PC-9 (cell line): ENCODE measurements at regions of chr2 and their contacts with region 1.

Region 1: GRCh38 chr2:196987649-196988364 is 61.3 kb upstream of the PGAP1 start:
- DNase-seq: peak; percentile 47 to 90
- H3K4me3 ChIP-seq: peak overlapping the region; percentile 28; the same call in 1 of the 2 replicates
- H3K27ac ChIP-seq: peak overlapping the region; percentile 92
- H3K4me1 ChIP-seq: peaks cover 32% of the 10 kb centered on the region
- H3K27me3 ChIP-seq: no peaks in the 10 kb centered on the region
- CTCF ChIP-seq: no peak

Region 2: GRCh38 chr2:196719110-196719872 is 268.5 kb before region 1 on chr2:
- CTCF ChIA-PET with region 1: no interaction called
- POLR2A ChIA-PET with region 1: interaction called, 11 read pairs
- intact Hi-C with region 1: no loop called
- DNase-seq: no peak
- H3K4me3 ChIP-seq: no peak overlapping the region
- H3K27ac ChIP-seq: no peak overlapping the region
- H3K4me1 ChIP-seq: no peaks in the 10 kb centered on the region
- H3K27me3 ChIP-seq: no peaks in the 10 kb centered on the region
- CTCF ChIP-seq: no peak

Region 3: DNA sequence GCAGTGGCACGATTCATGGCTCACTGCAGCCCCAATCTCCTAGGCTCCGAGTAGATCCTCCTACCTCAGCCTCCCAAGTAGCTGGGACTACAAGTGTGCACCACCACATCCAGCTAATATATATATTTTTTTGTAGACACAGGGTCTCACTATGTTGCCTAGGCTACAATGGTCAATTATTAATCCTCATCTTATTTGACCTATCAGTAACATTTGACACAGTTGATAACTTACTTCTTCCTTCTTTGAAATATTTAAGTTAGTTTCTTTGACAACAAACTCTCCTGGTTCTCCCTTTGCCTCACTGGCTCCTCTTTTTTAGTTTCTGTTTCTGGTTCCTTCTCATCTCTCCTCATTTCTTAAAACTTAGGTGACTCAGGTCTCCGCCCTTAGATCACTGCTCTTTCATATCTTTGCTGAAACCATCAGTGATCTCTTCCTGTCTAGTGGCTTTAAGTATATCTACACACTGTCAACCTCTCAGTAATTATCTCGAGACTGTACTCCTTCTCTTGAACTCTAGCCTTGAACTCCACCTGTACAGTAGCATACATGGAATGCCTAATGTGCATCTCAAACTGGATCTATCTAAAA is 72.8 kb before region 1 on chr2:
- CTCF ChIA-PET with region 1: no interaction called
- POLR2A ChIA-PET with region 1: no interaction called
- intact Hi-C with region 1: no loop called
- DNase-seq: no peak
- H3K4me3 ChIP-seq: no peak overlapping the region
- H3K27ac ChIP-seq: no peak overlapping the region
- H3K4me1 ChIP-seq: no peaks in the 10 kb centered on the region
- H3K27me3 ChIP-seq: no peaks in the 10 kb centered on the region
- CTCF ChIP-seq: no peak

Region 4: DNA sequence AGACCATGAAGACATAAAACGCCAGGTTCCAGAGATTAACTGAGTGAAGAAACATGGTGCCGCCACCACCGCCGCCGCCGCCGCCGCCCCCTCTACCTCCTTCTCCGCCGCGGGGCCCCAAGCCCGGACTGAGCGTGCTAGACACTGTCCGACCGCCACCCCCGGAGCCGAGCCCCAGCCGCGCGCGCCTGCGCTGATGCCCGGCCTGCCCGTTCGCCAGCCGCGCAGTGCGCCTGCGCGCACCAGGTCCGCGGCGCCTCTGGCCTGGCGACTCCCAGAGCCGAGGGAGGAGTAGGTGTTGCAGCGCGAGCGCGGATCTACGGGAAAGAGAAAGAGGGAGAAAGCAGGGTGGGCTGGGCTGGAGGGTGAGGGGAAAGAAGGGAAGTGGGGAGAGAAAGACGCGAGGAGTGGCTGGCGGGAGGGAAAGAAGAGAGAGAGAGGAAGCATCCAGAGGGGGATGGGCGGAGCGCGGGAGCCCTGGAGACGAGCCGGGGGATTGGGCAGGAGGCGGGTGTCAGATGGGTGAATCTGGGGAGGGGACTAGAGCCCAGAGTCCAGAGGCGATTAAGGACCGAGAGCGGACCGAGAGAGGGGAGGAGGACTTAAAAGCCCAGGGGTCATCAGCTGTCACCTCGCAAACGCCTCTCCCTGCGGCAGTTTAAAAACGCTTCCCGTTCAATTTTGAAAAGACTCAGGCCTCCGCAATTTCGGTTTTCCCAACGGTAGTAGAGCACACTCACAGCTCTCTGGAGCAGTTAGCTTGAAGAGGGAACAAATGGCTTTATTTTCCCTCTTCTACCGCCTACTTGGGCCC is 61.0 kb before region 1 on chr2 and contains the start of gene PGAP1:
- CTCF ChIA-PET with region 1: no interaction called
- POLR2A ChIA-PET with region 1: no interaction called
- intact Hi-C with region 1: loop called (anchors 1 kb)
- DNase-seq: peak; percentile 62 to 86
- H3K4me3 ChIP-seq: peak within 1 kb of the TSS; percentile 98
- H3K27ac ChIP-seq: peak within 1 kb of the TSS; percentile 60
- H3K4me1 ChIP-seq: peaks cover 18% of the 10 kb centered on the region
- H3K27me3 ChIP-seq: no peaks in the 10 kb centered on the region
- CTCF ChIP-seq: no peak
- total RNA-seq, gene PGAP1: 5.1 and 6.5 TPM in 2 replicates